CD8-positive, alpha-beta T cell (primary cell): ENCODE measurements at regions of chr2 and their contacts with region 1.

Region 1: DNA sequence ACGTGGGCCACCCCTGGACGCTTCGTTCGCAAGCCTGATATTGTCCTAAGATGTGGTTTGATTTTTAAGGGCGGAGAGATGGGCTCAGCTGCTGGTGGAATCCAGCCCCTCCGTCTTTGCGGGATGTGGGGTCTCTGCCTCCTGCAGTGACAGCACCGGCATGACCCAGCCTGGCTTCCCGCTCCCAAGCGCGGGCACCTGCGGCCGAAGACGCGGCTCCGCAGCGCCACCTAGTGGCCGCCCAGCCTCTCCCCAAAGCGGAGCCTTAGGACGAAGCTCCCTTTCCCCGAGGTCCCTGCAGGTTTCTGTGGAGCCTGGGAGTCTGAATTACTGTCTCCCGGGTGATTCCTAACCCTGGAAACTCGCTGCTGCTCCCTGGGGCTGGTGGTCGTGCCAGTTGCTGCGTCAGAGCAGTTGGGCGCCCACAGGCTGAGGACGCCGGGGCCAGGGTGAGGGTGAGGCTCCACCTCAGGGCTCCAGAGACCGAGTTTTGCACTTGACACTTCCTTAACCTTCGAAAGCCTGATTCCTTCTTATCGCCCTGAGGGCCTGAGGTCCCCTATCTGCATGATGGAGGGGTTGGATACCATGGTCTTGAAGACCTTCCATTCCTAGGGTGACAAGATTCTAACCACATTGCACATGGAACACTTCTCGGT is 137.5 kb downstream of the TPO start:
- DNase-seq: peak; percentile 16 to 81 (median 60)
- ATAC-seq: peak; percentile 46
- H3K4me3 ChIP-seq: no peak overlapping the region
- H3K4me3 Mint-ChIP-seq: no peak overlapping the region
- H3K27ac ChIP-seq: no peak overlapping the region
- H3K27ac Mint-ChIP-seq: no peak overlapping the region
- H3K4me1 ChIP-seq: peaks cover 11% of the 10 kb centered on the region
- H3K4me1 Mint-ChIP-seq: peaks cover 8% of the 10 kb centered on the region
- H3K27me3 ChIP-seq: peaks cover 2 to 3% of the 10 kb centered on the region in 2 experiments
- H3K27me3 Mint-ChIP-seq: peaks cover 11% of the 10 kb centered on the region
- CTCF ChIP-seq: peak; percentile 93

Region 2: GRCh38 chr2:529425-529824 is 1021.4 kb before region 1 on chr2:
- CTCF ChIA-PET with region 1: interaction called, 5 read pairs
- POLR2A ChIA-PET with region 1: no interaction called
- intact Hi-C with region 1: loop called (anchors 1 to 2 kb)
- DNase-seq: peak in 2 of 9 experiments; percentile 50 to 66
- ATAC-seq: peak; percentile 66
- H3K4me3 ChIP-seq: no peak overlapping the region
- H3K4me3 Mint-ChIP-seq: no peak overlapping the region
- H3K27ac ChIP-seq: no peak overlapping the region
- H3K27ac Mint-ChIP-seq: no peak overlapping the region
- H3K4me1 ChIP-seq: no peaks in the 10 kb centered on the region
- H3K4me1 Mint-ChIP-seq: peaks cover 3% of the 10 kb centered on the region
- H3K27me3 ChIP-seq: peaks cover 0 to 13% of the 10 kb centered on the region in 2 experiments
- H3K27me3 Mint-ChIP-seq: peaks cover 6% of the 10 kb centered on the region
- CTCF ChIP-seq: peak; percentile 68

Region 3: DNA sequence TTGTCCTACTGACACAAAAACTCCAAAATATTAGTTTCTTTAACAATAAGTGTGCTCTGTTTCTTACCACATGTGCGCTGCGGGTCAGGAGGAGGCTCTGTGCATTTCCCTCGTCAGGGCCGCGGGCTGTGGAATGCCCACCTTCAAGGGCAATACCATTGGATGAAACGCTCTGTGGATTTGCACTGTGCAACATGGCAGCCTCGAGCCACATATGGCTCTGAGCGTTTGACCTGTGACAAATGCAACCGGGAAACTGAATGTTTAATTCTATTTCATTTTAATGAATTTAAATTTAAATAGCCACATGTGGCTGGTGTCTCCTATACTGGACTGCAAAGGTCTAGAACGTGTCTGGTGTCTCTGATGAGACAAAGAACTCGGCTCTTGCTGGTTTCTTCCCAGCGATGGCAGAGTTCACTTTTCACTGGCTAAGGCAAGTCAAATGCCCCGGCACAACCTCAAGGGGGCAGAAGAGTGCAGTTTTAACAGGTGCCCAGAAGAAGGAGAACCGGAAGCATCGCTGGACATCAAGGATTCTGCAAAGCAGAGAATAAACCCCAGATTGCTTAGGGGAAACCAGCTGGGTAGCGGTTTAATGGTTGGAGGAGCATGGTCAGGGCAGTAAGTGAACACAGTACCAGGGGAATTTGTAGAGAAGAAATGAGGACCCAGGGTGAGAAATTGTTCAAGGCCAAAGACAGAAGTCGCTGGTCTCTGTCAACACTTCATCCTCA is 836.6 kb before region 1 on chr2:
- CTCF ChIA-PET with region 1: interaction called, 17 read pairs
- POLR2A ChIA-PET with region 1: no interaction called
- intact Hi-C with region 1: loop called (anchors 2 to 5 kb)
- DNase-seq: peak in 5 of 9 experiments; percentile 3 to 54 (median 40)
- ATAC-seq: no peak
- H3K4me3 ChIP-seq: no peak overlapping the region
- H3K4me3 Mint-ChIP-seq: no peak overlapping the region
- H3K27ac ChIP-seq: no peak overlapping the region
- H3K27ac Mint-ChIP-seq: no peak overlapping the region
- H3K4me1 ChIP-seq: no peaks in the 10 kb centered on the region
- H3K4me1 Mint-ChIP-seq: no peaks in the 10 kb centered on the region
- H3K27me3 ChIP-seq: peaks cover 0 to 6% of the 10 kb centered on the region in 2 experiments
- H3K27me3 Mint-ChIP-seq: peaks cover 26% of the 10 kb centered on the region
- CTCF ChIP-seq: no peak

Region 4: DNA sequence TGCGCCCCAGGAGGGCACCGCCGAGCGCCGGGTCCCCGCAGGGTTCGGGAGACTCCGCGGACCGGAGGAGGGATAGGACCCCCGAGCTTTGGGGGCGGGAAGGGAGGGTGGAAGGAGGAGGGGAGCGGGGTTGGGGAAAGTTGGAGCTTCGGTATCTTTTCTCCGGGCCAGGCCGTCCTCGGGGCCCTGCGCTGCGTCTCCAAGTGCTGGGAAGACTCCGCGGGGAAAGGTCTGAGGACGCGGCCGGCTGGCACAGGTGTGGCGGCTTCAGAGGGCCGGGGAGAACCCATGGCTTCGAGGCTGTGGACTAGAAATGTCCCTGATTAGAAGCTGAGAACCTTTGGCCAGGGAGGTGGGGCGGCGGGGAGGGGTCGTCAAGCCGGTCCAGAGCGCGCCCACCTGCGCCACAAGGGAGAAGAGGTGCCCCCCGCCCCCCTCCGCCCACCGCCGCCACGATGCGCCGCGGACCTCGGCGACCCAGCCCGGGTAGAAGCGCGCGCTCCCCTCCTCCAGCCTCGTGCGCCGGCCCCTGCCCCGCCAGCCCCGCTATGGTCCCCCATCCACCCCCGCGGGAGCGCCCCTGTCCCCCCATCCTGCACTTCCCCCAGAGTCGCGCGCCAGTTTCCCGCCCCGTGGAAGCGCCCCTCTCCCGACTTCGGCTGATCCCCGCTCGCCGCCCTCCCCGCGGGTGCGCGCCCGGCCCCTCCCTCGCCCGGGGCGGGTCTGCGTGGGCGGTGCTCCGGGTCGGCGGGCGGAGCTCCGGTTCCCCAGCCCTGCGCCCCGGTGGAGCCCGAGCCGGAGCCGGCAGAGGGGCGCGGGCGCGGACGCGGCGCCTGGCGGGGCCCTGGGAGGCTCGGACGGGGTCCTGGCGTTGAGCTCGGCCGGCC is 600.5 kb before region 1 on chr2 and contains the start of gene SNTG2:
- CTCF ChIA-PET with region 1: interaction called, 9 read pairs
- POLR2A ChIA-PET with region 1: no interaction called
- intact Hi-C with region 1: loop called (anchors 2 to 5 kb)
- DNase-seq: peak; percentile 22 to 78 (median 58)
- ATAC-seq: peak; percentile 92
- H3K4me3 ChIP-seq: peak within 1 kb of the TSS; percentile 47 to 52
- H3K4me3 Mint-ChIP-seq: peak within 1 kb of the TSS; percentile 81
- H3K27ac ChIP-seq: no peak within 1 kb of the TSS
- H3K27ac Mint-ChIP-seq: no peak within 1 kb of the TSS
- H3K4me1 ChIP-seq: peaks cover 14% of the 10 kb centered on the region
- H3K4me1 Mint-ChIP-seq: peaks cover 38% of the 10 kb centered on the region
- H3K27me3 ChIP-seq: peaks cover 0 to 11% of the 10 kb centered on the region in 2 experiments
- H3K27me3 Mint-ChIP-seq: peaks cover 25% of the 10 kb centered on the region
- CTCF ChIP-seq: no peak
- total RNA-seq, gene SNTG2: 5.1 to 5.3 TPM